ENCODE measurements at regions of chr13 and their contacts with region 1.

Region 1: GRCh38 chr13:99501184-99501847 is at the start of gene TM9SF2:
- DNase-seq: peak; percentile 97
- H3K4me3 Mint-ChIP-seq: peak within 1 kb of the TSS; percentile 90
- H3K27ac Mint-ChIP-seq: peak within 1 kb of the TSS; percentile 97
- H3K4me1 Mint-ChIP-seq: peaks cover 80% of the 10 kb centered on the region
- H3K27me3 Mint-ChIP-seq: no peaks in the 10 kb centered on the region
- total RNA-seq, gene TM9SF2: 84.5 to 88.6 TPM

Region 2: GRCh38 chr13:99442273-99442895 is 58.9 kb before region 1 on chr13:
- CTCF ChIA-PET with region 1: interaction called, 87 read pairs
- POLR2A ChIA-PET with region 1: interaction called, 10 read pairs
- DNase-seq: peak; percentile 54
- H3K4me3 Mint-ChIP-seq: no peak overlapping the region
- H3K27ac Mint-ChIP-seq: no peak overlapping the region
- H3K4me1 Mint-ChIP-seq: peaks cover 17% of the 10 kb centered on the region
- H3K27me3 Mint-ChIP-seq: peaks cover 21% of the 10 kb centered on the region

Region 3: GRCh38 chr13:99448546-99448945 is 52.8 kb before region 1 on chr13:
- CTCF ChIA-PET with region 1: interaction called, 87 read pairs
- POLR2A ChIA-PET with region 1: interaction called, 10 read pairs
- DNase-seq: no peak
- H3K4me3 Mint-ChIP-seq: no peak overlapping the region
- H3K27ac Mint-ChIP-seq: no peak overlapping the region
- H3K4me1 Mint-ChIP-seq: peaks cover 46% of the 10 kb centered on the region
- H3K27me3 Mint-ChIP-seq: no peaks in the 10 kb centered on the region

Region 4: DNA sequence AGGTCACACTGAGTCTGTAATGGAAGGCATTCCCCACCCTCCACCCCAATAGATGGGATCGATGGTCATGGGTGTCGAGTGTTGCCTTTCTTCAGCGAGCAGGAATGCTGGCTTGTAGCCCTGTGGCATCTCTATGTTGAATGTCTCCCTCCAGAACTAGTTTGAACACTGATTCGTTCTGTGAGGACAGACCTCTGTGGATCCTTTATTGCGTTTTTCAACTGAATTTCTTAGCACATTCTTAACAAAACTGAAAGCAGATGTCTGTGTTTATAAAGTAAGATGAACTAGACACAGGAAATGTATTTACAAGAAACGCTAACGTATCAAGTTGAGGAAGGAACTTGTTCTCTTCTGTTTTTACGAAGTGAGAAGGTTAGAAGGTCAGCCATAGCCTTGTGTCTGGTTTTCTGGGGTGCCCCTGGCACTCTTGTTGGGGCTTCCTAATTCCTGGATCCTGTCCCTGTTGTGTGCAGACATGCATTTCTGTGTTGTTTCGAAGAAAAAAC is 36.8 kb before region 1 on chr13:
- CTCF ChIA-PET with region 1: interaction called, 9 read pairs
- POLR2A ChIA-PET with region 1: interaction called, 26 read pairs
- DNase-seq: no peak
- H3K4me3 Mint-ChIP-seq: peak overlapping the region; percentile 49
- H3K27ac Mint-ChIP-seq: peak overlapping the region; percentile 94
- H3K4me1 Mint-ChIP-seq: peaks cover 63% of the 10 kb centered on the region
- H3K27me3 Mint-ChIP-seq: no peaks in the 10 kb centered on the region

Region 5: GRCh38 chr13:99484473-99484872 is 16.8 kb before region 1 on chr13:
- CTCF ChIA-PET with region 1: interaction called, 10 read pairs
- POLR2A ChIA-PET with region 1: interaction called, 7 read pairs
- DNase-seq: peak; percentile 39
- H3K4me3 Mint-ChIP-seq: no peak overlapping the region
- H3K27ac Mint-ChIP-seq: peak overlapping the region; percentile 32
- H3K4me1 Mint-ChIP-seq: peaks cover 30% of the 10 kb centered on the region
- H3K27me3 Mint-ChIP-seq: no peaks in the 10 kb centered on the region

Region 6: DNA sequence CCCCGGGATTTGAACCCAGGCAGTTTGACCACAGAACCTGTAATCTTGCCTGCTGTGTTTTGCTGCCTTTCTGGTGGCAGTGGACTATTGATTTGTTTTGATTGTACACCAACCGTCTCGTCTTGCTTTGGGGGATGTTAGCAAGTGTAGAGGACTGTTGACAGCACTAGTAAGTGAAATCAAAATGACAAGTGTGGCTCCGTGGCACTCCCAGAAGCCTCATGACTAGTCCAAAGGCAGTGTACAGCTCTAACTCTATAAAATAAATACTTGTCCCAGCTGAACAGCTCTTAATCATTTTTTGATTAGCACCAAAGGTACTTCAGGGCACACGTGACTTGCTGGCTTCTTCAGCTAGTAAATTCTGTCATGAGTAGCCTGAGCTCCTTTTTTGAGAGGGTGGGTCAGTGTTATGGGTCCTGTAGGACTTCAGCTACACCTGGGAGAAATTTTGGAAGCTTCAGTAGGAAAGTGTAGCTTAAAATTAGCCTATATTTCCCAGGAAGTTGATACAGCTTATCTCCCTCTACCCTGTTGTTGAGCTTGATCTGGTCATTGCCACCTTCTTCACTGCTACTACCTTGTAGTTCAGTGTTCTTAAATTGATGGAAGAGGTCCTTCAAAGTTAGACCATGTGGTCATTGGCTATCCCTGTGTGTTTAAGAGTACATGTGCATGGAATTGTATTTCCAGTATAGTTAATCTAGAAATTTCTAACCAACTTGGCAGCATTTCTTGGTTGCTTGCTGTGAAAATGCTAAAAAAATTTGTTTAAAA is 15.0 kb after region 1 on chr13:
- CTCF ChIA-PET with region 1: interaction called, 17 read pairs
- POLR2A ChIA-PET with region 1: interaction called, 6 read pairs
- DNase-seq: no peak
- H3K4me3 Mint-ChIP-seq: no peak overlapping the region
- H3K27ac Mint-ChIP-seq: no peak overlapping the region
- H3K4me1 Mint-ChIP-seq: peaks cover 22% of the 10 kb centered on the region
- H3K27me3 Mint-ChIP-seq: no peaks in the 10 kb centered on the region

Region 7: DNA sequence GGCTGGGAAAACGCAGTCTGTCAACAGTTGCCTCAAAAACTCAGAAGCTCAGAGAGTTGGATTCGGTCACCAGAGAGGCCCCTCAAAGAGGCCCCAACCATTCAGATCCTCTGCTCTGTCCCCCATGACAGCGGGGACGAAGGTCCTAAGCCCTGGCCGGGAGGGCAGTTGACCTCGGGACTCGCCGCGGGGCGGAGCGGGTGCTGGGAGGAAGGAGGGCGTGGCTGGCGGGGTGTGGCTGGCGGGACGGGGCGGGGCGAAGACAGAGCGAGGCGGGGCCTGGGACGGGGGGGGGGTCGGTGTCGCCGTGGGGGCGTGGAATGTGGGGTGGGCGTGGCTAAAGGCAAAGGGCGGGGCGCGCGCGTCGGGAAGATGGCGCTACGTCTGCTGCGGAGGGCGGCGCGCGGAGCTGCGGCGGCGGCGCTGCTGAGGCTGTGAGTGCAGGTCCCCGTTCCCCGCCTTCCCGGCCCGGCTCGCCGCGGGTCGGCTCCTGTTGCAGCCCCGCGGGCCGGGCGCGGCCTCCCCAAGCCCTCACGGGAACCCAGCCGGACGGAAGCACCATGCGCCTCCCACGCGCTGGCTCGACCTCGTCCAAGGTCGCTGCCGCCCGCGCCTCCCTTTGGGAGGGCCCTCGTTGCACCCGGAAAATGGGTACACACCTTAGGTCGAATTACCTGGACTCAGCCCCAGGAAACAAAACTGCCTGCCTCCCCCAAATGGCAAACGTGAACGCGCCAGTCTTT is 105.2 kb after region 1 on chr13:
- CTCF ChIA-PET with region 1: interaction called, 3 read pairs
- POLR2A ChIA-PET with region 1: interaction called, 13 read pairs
- DNase-seq: peak; percentile 91
- H3K4me3 Mint-ChIP-seq: peak within 1 kb of the TSS; percentile 72
- H3K27ac Mint-ChIP-seq: peak within 1 kb of the TSS; percentile 79
- H3K4me1 Mint-ChIP-seq: peaks cover 31% of the 10 kb centered on the region
- H3K27me3 Mint-ChIP-seq: no peaks in the 10 kb centered on the region

Measured in activated CD4-positive, alpha-beta memory T cell treated with anti-CD3 and anti-CD28 coated beads, Interleukin-2, amount 10 ng/mL, durations not matched to agents 7 days and 5 days (primary cell).